ENCODE measurements at regions of chr12 and their contacts with region 1.

Region 1: GRCh38 chr12:69359531-69360347 is at the start of gene YEATS4:
- DNase-seq: peak; percentile 55
- H3K4me3 ChIP-seq: peak within 1 kb of the TSS; percentile 93
- CTCF ChIP-seq: no peak

Region 2: GRCh38 chr12:69157023-69157655 is 202.6 kb before region 1 on chr12:
- CTCF ChIA-PET with region 1: interaction called, 10 read pairs
- POLR2A ChIA-PET with region 1: no interaction called
- DNase-seq: no peak
- H3K4me3 ChIP-seq: no peak overlapping the region
- CTCF ChIP-seq: peak; percentile 100

Region 3: GRCh38 chr12:69348162-69348938 is 11.4 kb before region 1 on chr12 and contains the start of gene LYZ:
- CTCF ChIA-PET with region 1: interaction called, 12 read pairs
- POLR2A ChIA-PET with region 1: no interaction called
- DNase-seq: no peak
- H3K4me3 ChIP-seq: no peak within 1 kb of the TSS
- CTCF ChIP-seq: no peak

Region 4: GRCh38 chr12:69405466-69405865 is 45.7 kb after region 1 on chr12:
- CTCF ChIA-PET with region 1: no interaction called
- POLR2A ChIA-PET with region 1: no interaction called
- DNase-seq: peak; percentile 95
- H3K4me3 ChIP-seq: no peak overlapping the region
- CTCF ChIP-seq: no peak

Region 5: DNA sequence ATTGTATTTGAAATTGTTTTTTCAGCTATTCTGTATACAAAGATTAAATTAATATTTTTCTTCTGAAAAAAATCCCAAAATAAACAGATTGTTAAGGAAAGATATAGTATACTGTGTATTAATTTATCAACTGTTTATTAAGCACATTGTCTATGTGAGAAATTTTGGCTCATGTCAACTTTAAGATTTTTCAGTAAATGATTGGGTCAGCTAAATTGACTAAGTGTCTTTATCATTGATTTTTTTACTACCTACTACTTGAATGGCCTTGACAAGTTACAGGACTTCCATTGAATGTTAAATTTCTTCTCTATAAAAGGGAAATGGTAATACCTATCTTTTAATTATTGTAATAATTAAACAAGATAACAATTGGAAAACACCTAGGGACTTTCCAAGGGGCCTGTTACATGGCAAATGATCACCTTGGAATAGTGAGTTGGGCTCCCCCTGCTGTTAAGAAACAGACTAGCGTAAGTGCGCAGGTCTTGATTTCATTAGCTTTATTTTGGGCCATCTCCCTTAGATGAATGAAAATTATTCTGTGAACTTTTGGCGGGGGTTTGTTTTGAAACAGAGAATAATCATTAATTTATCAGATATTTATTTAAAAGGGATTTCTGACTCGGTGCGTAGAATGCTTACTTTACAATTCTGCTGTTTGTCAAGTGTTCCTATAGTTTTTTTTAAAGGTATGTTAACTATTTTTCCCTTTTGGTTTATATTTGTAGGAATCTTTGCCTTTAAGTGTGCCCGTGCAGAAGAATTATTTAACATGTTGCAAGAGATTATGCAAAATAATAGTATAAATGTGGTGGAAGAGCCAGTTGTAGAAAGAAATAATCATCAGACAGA is 211.0 kb after region 1 on chr12:
- CTCF ChIA-PET with region 1: interaction called, 45 read pairs
- POLR2A ChIA-PET with region 1: no interaction called
- DNase-seq: no peak
- H3K4me3 ChIP-seq: no peak overlapping the region
- CTCF ChIP-seq: peak; percentile 65

Region 6: GRCh38 chr12:69585189-69586062 is 225.7 kb after region 1 on chr12 and contains the start of gene CCT2:
- CTCF ChIA-PET with region 1: interaction called, 15 read pairs
- POLR2A ChIA-PET with region 1: no interaction called
- DNase-seq: peak; percentile 52
- H3K4me3 ChIP-seq: peak within 1 kb of the TSS; percentile 100
- CTCF ChIP-seq: peak; percentile 63

Region 7: DNA sequence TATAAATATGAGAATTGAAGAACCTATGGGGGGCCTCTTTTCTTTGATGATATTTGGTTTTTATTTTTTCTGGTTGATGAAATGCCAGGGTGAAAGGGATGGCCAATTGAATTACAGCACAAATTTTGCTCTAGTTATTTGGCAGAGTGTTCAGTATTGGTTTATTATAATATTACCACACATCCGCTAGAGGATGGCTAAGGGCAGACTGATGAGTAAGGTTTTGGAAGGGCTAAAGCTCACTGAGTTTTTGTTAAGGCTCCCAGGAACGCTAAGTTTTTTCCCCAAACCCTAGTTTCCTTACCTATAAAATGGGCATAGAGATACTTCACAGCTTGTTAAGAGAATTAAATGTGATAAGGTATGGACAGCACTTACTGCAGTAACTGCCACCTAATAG is 285.3 kb after region 1 on chr12:
- CTCF ChIA-PET with region 1: interaction called, 99 read pairs
- POLR2A ChIA-PET with region 1: no interaction called
- DNase-seq: no peak
- H3K4me3 ChIP-seq: no peak overlapping the region
- CTCF ChIP-seq: no peak

Region 8: DNA sequence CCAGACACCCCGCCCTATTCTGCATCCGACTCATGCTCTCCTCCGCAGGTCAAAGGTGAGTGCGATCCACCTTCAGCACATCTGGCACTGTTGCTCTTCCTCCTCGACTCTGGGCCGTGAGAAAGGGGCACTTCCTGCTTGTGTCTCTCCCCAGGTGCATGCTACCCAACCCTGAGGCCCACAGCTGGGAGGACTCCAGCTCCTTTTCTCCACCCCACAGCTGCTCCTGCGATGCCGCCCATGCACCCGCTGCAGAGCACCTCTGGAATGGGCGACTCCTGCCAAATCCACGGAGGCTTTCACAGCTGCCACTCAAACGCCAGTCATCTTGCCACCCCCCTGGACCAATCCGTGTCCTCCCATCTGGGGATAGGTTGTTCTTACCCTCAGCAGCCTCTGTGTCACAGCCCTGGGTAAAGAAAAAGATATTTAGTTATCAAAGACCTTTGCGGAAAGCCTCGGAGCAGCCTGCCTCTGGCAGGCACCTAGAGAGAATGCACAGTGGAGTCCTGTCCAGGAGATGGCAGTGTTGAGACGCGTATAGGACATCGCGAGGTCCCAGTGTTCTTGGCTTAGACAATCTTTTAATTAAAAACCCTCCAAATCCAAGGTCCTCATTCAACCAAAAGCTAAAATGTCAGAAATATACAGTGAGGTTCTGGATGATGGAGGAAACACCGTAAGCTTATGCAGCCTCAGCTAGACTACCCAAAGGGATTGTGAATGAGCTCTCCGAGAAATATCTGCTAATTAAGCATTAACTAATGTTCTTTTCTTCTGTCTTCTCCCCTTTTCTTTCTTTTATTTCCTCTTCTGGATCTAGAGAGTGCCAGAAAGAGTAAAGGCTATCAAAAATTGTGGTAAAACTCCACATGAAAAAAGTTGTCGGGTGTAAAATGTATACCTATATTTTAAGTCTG is 519.6 kb after region 1 on chr12:
- CTCF ChIA-PET with region 1: interaction called, 12 read pairs
- POLR2A ChIA-PET with region 1: no interaction called
- DNase-seq: no peak
- H3K4me3 ChIP-seq: peak overlapping the region; percentile 42
- CTCF ChIP-seq: peak; percentile 80

Measured in AG04449 (cell line).